ENCODE measurements at regions of chr2 and their contacts with region 1.

Region 1: GRCh38 chr2:74250189-74250631 is 51.8 kb downstream of the MTHFD2 start:
- DNase-seq: peak; percentile 82
- CTCF ChIP-seq: peak; percentile 86

Region 2: GRCh38 chr2:73939419-73939818 is 310.8 kb before region 1 on chr2:
- CTCF ChIA-PET with region 1: no interaction called
- POLR2A ChIA-PET with region 1: no interaction called
- DNase-seq: no peak
- CTCF ChIP-seq: peak; percentile 6

Region 3: DNA sequence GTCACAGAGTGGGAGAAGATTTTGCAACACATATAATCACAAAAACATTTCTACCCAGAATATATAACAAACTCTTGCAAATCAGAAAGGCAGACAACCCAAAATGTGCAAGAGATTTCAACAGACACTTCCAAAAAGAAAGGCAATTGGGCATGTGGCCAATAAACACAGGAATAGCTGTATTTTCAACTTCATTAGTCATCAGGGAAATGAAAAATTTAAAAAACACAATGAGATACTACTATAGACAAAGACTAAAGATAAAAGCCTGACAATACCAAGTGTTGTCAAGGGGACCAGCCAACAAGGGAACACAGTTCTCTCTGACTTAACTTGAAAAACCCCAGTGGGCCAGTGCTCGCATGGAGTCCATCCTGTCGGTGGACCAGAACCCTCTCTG is 11.3 kb before region 1 on chr2:
- CTCF ChIA-PET with region 1: interaction called, 50 read pairs
- POLR2A ChIA-PET with region 1: no interaction called
- DNase-seq: no peak
- CTCF ChIP-seq: no peak

Region 4: DNA sequence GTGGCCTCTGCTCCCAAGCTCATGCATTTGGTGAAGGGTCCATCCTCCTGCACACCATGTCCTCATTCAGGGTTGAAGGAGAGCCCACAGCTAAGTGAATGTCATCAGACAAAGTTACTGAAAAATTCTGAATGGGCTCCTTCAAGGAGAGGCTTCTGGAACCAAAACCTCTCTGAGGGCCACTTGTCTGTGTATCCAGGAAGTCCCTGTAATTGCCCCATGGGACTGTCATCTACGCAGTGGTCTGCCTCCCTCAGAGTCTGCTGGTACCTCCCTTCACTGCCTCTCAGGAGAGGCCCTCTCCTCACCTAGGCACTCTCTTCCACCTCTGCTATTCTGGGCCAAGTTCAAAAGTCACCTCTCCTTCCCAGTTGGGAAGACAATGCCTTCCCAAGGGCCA is 25.0 kb after region 1 on chr2:
- CTCF ChIA-PET with region 1: interaction called, 11 read pairs
- POLR2A ChIA-PET with region 1: no interaction called
- DNase-seq: no peak
- CTCF ChIP-seq: no peak

Region 5: GRCh38 chr2:74317701-74318301 is 67.6 kb after region 1 on chr2:
- CTCF ChIA-PET with region 1: interaction called, 12 read pairs
- POLR2A ChIA-PET with region 1: no interaction called
- DNase-seq: no peak
- CTCF ChIP-seq: no peak

Region 6: GRCh38 chr2:74399785-74400184 is 149.6 kb after region 1 on chr2:
- CTCF ChIA-PET with region 1: interaction called, 10 read pairs
- POLR2A ChIA-PET with region 1: no interaction called
- DNase-seq: peak; percentile 53
- CTCF ChIP-seq: peak; percentile 42